CD4-positive, alpha-beta T cell (primary cell): ENCODE measurements at regions of chr2 and their contacts with region 1.

Region 1: DNA sequence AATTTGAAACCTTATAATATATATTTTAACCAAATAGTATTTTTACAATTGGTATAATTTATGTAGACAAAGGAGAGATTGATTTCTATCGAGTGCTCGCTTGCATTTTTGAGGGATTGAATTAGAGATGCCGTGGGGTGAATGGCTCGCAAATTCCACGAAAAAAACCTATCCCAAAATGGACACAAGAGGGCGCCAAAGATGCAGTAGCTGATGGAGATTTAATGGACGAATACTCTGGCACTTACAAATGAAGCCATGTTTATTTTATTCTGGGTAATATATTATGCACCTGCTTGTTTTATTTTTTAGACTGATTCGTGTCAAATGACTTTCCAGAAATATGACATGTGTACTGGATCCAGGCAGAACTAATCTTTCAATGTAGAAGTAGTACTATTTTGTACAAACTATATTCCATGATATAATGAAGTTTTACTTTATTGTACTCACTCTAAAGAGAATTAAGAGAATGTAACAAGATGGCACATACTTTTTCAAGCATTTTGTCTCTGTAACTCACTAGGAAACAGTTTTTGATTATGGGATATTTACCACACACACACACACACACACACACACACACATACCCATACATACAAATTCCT is 505.4 kb downstream of the PLCL1 start:
- DNase-seq: peak; percentile 17 to 78 (median 42)
- ATAC-seq: peak; percentile 64
- H3K4me3 ChIP-seq: no peak overlapping the region
- H3K4me3 Mint-ChIP-seq: no peak overlapping the region
- H3K27ac ChIP-seq: no peak overlapping the region
- H3K27ac Mint-ChIP-seq: no peak overlapping the region
- H3K4me1 ChIP-seq: no peaks in the 10 kb centered on the region
- H3K4me1 Mint-ChIP-seq: no peaks in the 10 kb centered on the region
- H3K27me3 ChIP-seq: peaks cover 11 to 25% of the 10 kb centered on the region in 2 experiments
- H3K27me3 Mint-ChIP-seq: peaks cover 58% of the 10 kb centered on the region
- CTCF ChIP-seq: peak; percentile 98

Region 2: GRCh38 chr2:197001921-197002320 is 1307.9 kb before region 1 on chr2:
- CTCF ChIA-PET with region 1: no interaction called
- POLR2A ChIA-PET with region 1: no interaction called
- intact Hi-C with region 1: no loop called
- DNase-seq: no peak
- ATAC-seq: no peak
- H3K4me3 ChIP-seq: no peak overlapping the region
- H3K4me3 Mint-ChIP-seq: no peak overlapping the region
- H3K27ac ChIP-seq: no peak overlapping the region
- H3K27ac Mint-ChIP-seq: no peak overlapping the region
- H3K4me1 ChIP-seq: no peaks in the 10 kb centered on the region
- H3K4me1 Mint-ChIP-seq: no peaks in the 10 kb centered on the region
- H3K27me3 ChIP-seq: no peaks in the 10 kb centered on the region
- H3K27me3 Mint-ChIP-seq: no peaks in the 10 kb centered on the region
- CTCF ChIP-seq: no peak

Region 3: GRCh38 chr2:198296665-198297308 is 13.0 kb before region 1 on chr2:
- CTCF ChIA-PET with region 1: interaction called, 15 read pairs
- POLR2A ChIA-PET with region 1: no interaction called
- intact Hi-C with region 1: no loop called
- DNase-seq: peak; percentile 28 to 82 (median 48)
- ATAC-seq: peak; percentile 77
- H3K4me3 ChIP-seq: no peak overlapping the region
- H3K4me3 Mint-ChIP-seq: no peak overlapping the region
- H3K27ac ChIP-seq: no peak overlapping the region
- H3K27ac Mint-ChIP-seq: no peak overlapping the region
- H3K4me1 ChIP-seq: no peaks in the 10 kb centered on the region
- H3K4me1 Mint-ChIP-seq: no peaks in the 10 kb centered on the region
- H3K27me3 ChIP-seq: peaks cover 0 to 2% of the 10 kb centered on the region in 2 experiments
- H3K27me3 Mint-ChIP-seq: peaks cover 32% of the 10 kb centered on the region
- CTCF ChIP-seq: peak; percentile 94

Region 4: DNA sequence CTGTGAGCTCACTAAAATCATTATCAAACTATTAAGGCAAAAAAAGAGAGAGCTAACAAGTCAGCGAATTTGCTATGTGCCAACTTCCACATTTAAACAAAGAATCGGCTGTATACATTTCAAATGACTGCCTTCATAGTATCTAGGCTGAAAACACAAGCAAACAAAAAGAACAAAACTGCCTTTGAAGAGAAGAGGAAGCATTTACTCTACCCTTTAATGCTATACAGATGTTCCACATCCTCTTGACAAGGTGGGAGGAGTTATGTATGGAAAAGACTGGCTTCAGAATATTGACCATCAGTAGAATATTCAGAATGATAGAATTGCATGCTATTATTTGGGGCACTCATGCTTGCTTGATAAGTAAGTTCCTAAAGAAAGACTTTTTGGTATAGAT is 236.3 kb after region 1 on chr2:
- CTCF ChIA-PET with region 1: no interaction called
- POLR2A ChIA-PET with region 1: no interaction called
- intact Hi-C with region 1: no loop called
- DNase-seq: no peak
- ATAC-seq: no peak
- H3K4me3 ChIP-seq: no peak overlapping the region
- H3K4me3 Mint-ChIP-seq: no peak overlapping the region
- H3K27ac ChIP-seq: no peak overlapping the region
- H3K27ac Mint-ChIP-seq: no peak overlapping the region
- H3K4me1 ChIP-seq: no peaks in the 10 kb centered on the region
- H3K4me1 Mint-ChIP-seq: no peaks in the 10 kb centered on the region
- H3K27me3 ChIP-seq: no peaks in the 10 kb centered on the region
- H3K27me3 Mint-ChIP-seq: no peaks in the 10 kb centered on the region
- CTCF ChIP-seq: no peak

Region 5: GRCh38 chr2:198558176-198558575 is 248.4 kb after region 1 on chr2:
- CTCF ChIA-PET with region 1: no interaction called
- POLR2A ChIA-PET with region 1: no interaction called
- intact Hi-C with region 1: no loop called
- DNase-seq: no peak
- ATAC-seq: no peak
- H3K4me3 ChIP-seq: no peak overlapping the region
- H3K4me3 Mint-ChIP-seq: no peak overlapping the region
- H3K27ac ChIP-seq: no peak overlapping the region
- H3K27ac Mint-ChIP-seq: no peak overlapping the region
- H3K4me1 ChIP-seq: no peaks in the 10 kb centered on the region
- H3K4me1 Mint-ChIP-seq: no peaks in the 10 kb centered on the region
- H3K27me3 ChIP-seq: no peaks in the 10 kb centered on the region
- H3K27me3 Mint-ChIP-seq: no peaks in the 10 kb centered on the region
- CTCF ChIP-seq: no peak

Region 6: DNA sequence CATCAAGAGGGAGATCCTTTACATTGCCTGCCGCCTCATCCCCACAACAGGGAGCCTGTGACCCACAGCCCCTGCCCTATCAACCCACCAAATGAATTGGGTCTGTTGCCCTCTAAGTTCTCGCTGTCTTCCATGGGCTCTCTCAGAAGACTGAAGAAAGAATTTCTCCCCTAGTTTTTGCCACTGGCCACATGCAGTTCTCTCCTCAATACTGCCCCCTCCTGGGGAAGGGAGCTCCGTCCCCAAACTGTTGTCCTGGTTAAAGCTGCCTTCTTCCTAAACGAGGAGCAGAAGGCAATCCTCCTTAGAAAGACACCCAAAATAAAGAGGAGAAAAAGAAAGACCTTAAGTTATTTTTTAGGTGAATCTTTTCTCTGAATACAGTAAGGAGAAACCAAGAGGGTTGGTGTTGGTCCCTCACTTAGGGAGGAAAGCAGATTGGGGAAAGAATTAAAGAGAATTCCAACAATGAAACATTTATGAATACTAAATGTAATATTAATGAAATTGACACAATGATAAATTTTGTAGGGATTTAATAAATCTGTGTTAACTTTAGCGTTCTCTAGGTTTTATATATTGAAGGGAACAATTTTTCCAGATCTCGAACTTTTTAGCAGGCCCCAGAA is 1179.1 kb after region 1 on chr2:
- CTCF ChIA-PET with region 1: interaction called, 24 read pairs
- POLR2A ChIA-PET with region 1: no interaction called
- intact Hi-C with region 1: loop called (anchors 1 to 2 kb)
- DNase-seq: peak in 9 of 14 experiments; percentile 17 to 65 (median 34)
- ATAC-seq: no peak
- H3K4me3 ChIP-seq: no peak overlapping the region
- H3K4me3 Mint-ChIP-seq: no peak overlapping the region
- H3K27ac ChIP-seq: no peak overlapping the region
- H3K27ac Mint-ChIP-seq: no peak overlapping the region
- H3K4me1 ChIP-seq: no peaks in the 10 kb centered on the region
- H3K4me1 Mint-ChIP-seq: no peaks in the 10 kb centered on the region
- H3K27me3 ChIP-seq: peaks cover 0 to 18% of the 10 kb centered on the region in 2 experiments
- H3K27me3 Mint-ChIP-seq: peaks cover 43% of the 10 kb centered on the region
- CTCF ChIP-seq: peak; percentile 65

Region 7: GRCh38 chr2:199739413-199740110 is 1429.8 kb after region 1 on chr2:
- CTCF ChIA-PET with region 1: interaction called, 20 read pairs
- POLR2A ChIA-PET with region 1: no interaction called
- intact Hi-C with region 1: loop called (anchors 1 to 2 kb)
- DNase-seq: peak; percentile 32 to 70 (median 50)
- ATAC-seq: no peak
- H3K4me3 ChIP-seq: no peak overlapping the region
- H3K4me3 Mint-ChIP-seq: no peak overlapping the region
- H3K27ac ChIP-seq: no peak overlapping the region
- H3K27ac Mint-ChIP-seq: no peak overlapping the region
- H3K4me1 ChIP-seq: peaks cover 6% of the 10 kb centered on the region
- H3K4me1 Mint-ChIP-seq: peaks cover 6% of the 10 kb centered on the region
- H3K27me3 ChIP-seq: peaks cover 0 to 8% of the 10 kb centered on the region in 2 experiments
- H3K27me3 Mint-ChIP-seq: peaks cover 35% of the 10 kb centered on the region
- CTCF ChIP-seq: peak; percentile 97

Region 8: GRCh38 chr2:199861132-199861774 is 1551.5 kb after region 1 on chr2:
- CTCF ChIA-PET with region 1: no interaction called
- POLR2A ChIA-PET with region 1: no interaction called
- intact Hi-C with region 1: loop called in 1 of 2 experiments (anchors 5 kb)
- DNase-seq: peak in 3 of 14 experiments; percentile 13 to 24 (median 22)
- ATAC-seq: no peak
- H3K4me3 ChIP-seq: no peak overlapping the region
- H3K4me3 Mint-ChIP-seq: no peak overlapping the region
- H3K27ac ChIP-seq: no peak overlapping the region
- H3K27ac Mint-ChIP-seq: no peak overlapping the region
- H3K4me1 ChIP-seq: no peaks in the 10 kb centered on the region
- H3K4me1 Mint-ChIP-seq: no peaks in the 10 kb centered on the region
- H3K27me3 ChIP-seq: peaks cover 0 to 7% of the 10 kb centered on the region in 2 experiments
- H3K27me3 Mint-ChIP-seq: peaks cover 36% of the 10 kb centered on the region
- CTCF ChIP-seq: peak; percentile 64

Region 9: GRCh38 chr2:199940373-199940772 is 1630.6 kb after region 1 on chr2:
- CTCF ChIA-PET with region 1: interaction called, 4 read pairs
- POLR2A ChIA-PET with region 1: no interaction called
- intact Hi-C with region 1: loop called in 1 of 2 experiments (anchors 10 kb)
- DNase-seq: peak in 3 of 14 experiments; percentile 19 to 25 (median 21)
- ATAC-seq: peak; percentile 65
- H3K4me3 ChIP-seq: no peak overlapping the region
- H3K4me3 Mint-ChIP-seq: no peak overlapping the region
- H3K27ac ChIP-seq: no peak overlapping the region
- H3K27ac Mint-ChIP-seq: no peak overlapping the region
- H3K4me1 ChIP-seq: no peaks in the 10 kb centered on the region
- H3K4me1 Mint-ChIP-seq: peaks cover 13% of the 10 kb centered on the region
- H3K27me3 ChIP-seq: no peaks in the 10 kb centered on the region
- H3K27me3 Mint-ChIP-seq: no peaks in the 10 kb centered on the region
- CTCF ChIP-seq: no peak